Transverse colon (tissue), 4 donors: ENCODE measurements at regions of chr17 and their contacts with region 1.

Region 1: GRCh38 chr17:51764387-51764972 is 394.0 kb downstream of the CA10 start:
- DNase-seq: peak; percentile 50
- H3K4me3 ChIP-seq: no peak overlapping the region
- H3K27ac ChIP-seq: no peak overlapping the region
- H3K4me1 ChIP-seq: peaks cover 0 to under 1% (median 0%) of the 10 kb centered on the region in 4 donors
- H3K27me3 ChIP-seq: no peaks in the 10 kb centered on the region
- CTCF ChIP-seq: peak; percentile 63 to 72 (median 71)
- EP300 ChIP-seq: no peak
- POLR2A ChIP-seq: no peak

Region 2: DNA sequence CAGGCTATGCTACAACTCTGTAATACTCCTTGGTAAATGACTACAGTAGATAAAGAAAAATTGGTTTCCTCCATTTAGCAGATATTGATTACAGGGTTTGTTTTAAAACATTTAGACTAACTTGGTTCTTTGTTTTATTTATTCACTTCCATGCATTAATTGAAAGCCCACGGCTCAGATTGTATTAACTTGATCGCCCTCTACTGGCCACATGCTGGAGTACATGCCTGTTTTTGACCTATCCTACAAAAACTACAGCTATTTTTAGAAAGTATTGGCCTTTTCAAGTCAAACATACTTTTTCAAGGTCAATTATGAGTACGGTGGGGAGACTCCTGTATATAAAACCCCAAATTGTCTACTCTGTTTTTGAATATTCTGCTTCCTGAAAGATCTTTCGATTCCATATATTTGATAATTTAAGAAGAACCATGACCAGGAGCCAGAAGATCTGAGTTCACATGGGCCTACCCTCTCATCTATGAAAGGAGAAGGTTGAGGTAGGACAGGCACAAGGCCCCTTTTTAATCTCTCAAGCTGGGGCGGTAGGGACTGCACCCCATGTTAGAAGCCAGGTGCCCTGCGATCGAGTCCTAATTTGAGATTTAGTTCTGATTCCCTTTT is 342.3 kb after region 1 on chr17:
- in situ Hi-C with region 1: loop called (anchors 5 to 25 kb)
- intact Hi-C with region 1: no loop called
- DNase-seq: peak; percentile 33
- H3K4me3 ChIP-seq: no peak overlapping the region
- H3K27ac ChIP-seq: no peak overlapping the region
- H3K4me1 ChIP-seq: no peaks in the 10 kb centered on the region
- H3K27me3 ChIP-seq: no peaks in the 10 kb centered on the region
- CTCF ChIP-seq: peak; percentile 67 to 75 (median 70)
- EP300 ChIP-seq: no peak
- POLR2A ChIP-seq: no peak